Activated B cell treated with CpG ODN at 0.5 μM for 24 hours (primary cell): ENCODE measurements at regions of chr19 and their contacts with region 1.

Region 1: DNA sequence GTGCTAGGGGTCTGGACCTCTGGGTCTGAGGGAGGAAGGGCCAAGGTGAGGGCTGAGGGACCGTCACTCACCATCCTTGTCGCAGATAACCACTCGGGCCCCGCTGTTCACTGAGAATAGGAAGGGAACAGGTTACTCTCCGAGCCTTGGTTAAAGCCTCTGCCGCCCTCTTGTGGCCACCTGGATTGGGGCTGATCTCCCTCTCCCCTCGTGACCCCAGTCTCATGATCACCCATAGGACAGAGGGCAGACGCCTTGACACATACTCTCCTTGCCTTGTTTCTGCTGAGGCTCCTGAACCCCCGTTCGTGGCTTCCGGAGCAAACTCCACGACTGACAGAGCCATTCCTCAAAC is 580 bp downstream of the HSD17B14 start:
- DNase-seq: peak; percentile 89
- ATAC-seq: peak; percentile 86
- H3K4me3 Mint-ChIP-seq: peak overlapping the region; percentile 88
- H3K27ac Mint-ChIP-seq: peak overlapping the region; percentile 75
- H3K4me1 Mint-ChIP-seq: peaks cover 26% of the 10 kb centered on the region
- H3K27me3 Mint-ChIP-seq: no peaks in the 10 kb centered on the region
- CTCF ChIP-seq: no peak

Region 2: DNA sequence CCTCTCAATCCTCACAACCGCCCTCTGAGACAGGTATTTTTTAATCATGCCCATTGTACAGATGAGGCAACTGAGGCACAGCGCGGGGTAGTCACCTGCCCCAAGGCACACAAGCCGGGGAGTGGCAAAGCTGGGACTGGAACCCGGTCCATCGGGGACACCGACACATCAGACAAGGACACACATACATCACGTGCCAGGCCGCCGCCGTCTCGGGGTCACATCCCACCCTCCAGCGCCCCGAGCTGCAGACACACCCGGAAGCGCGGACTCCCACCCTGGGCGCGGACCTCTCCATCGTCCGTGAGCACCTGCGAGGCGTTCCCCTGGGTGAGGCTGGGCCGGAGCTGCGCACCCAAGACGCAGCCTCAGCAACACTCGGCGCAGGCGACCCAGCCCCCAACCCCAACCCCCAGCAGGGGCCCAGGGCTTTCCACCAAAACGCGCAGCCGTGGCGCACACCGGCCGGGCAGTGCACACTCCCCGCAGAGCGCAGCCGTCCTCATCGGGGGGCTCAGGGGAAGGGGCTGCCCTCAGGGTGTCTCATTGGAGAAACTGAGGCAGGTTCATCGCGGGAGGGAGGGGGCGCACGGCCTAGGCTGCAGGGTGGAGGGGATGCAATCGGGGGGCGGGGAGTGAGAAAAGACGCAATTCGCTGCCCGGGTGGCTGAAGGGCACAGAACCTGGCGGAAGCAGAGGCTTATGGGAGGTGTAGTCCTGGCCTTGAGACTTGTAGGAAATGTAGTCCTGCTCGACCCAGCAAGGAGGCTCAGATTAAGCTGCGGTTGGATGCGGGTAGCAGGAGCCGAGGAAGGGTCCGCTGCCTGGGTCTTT is 322.2 kb before region 1 on chr19:
- CTCF ChIA-PET with region 1: no interaction called
- POLR2A ChIA-PET with region 1: no interaction called
- intact Hi-C with region 1: loop called (anchors 10 kb)
- DNase-seq: peak; percentile 51
- ATAC-seq: peak; percentile 90
- H3K4me3 Mint-ChIP-seq: no peak overlapping the region
- H3K27ac Mint-ChIP-seq: peak overlapping the region; percentile 69
- H3K4me1 Mint-ChIP-seq: peaks cover 17% of the 10 kb centered on the region
- H3K27me3 Mint-ChIP-seq: peaks cover 2% of the 10 kb centered on the region
- CTCF ChIP-seq: no peak

Region 3: GRCh38 chr19:48780631-48781391 is 54.9 kb before region 1 on chr19:
- CTCF ChIA-PET with region 1: interaction called, 4 read pairs
- POLR2A ChIA-PET with region 1: interaction called, 13 read pairs
- intact Hi-C with region 1: no loop called
- DNase-seq: no peak
- ATAC-seq: no peak
- H3K4me3 Mint-ChIP-seq: no peak overlapping the region
- H3K27ac Mint-ChIP-seq: peak overlapping the region; percentile 51
- H3K4me1 Mint-ChIP-seq: peaks cover 22% of the 10 kb centered on the region
- H3K27me3 Mint-ChIP-seq: no peaks in the 10 kb centered on the region
- CTCF ChIP-seq: no peak

Region 4: GRCh38 chr19:48795055-48795684 is 40.5 kb before region 1 on chr19:
- CTCF ChIA-PET with region 1: interaction called, 272 read pairs
- POLR2A ChIA-PET with region 1: interaction called, 20 read pairs
- intact Hi-C with region 1: loop called (anchors 1 kb)
- DNase-seq: peak; percentile 79
- ATAC-seq: peak; percentile 98
- H3K4me3 Mint-ChIP-seq: peak overlapping the region; percentile 94
- H3K27ac Mint-ChIP-seq: peak overlapping the region; percentile 88
- H3K4me1 Mint-ChIP-seq: peaks cover 10% of the 10 kb centered on the region
- H3K27me3 Mint-ChIP-seq: no peaks in the 10 kb centered on the region
- CTCF ChIP-seq: peak; percentile 86

Region 5: DNA sequence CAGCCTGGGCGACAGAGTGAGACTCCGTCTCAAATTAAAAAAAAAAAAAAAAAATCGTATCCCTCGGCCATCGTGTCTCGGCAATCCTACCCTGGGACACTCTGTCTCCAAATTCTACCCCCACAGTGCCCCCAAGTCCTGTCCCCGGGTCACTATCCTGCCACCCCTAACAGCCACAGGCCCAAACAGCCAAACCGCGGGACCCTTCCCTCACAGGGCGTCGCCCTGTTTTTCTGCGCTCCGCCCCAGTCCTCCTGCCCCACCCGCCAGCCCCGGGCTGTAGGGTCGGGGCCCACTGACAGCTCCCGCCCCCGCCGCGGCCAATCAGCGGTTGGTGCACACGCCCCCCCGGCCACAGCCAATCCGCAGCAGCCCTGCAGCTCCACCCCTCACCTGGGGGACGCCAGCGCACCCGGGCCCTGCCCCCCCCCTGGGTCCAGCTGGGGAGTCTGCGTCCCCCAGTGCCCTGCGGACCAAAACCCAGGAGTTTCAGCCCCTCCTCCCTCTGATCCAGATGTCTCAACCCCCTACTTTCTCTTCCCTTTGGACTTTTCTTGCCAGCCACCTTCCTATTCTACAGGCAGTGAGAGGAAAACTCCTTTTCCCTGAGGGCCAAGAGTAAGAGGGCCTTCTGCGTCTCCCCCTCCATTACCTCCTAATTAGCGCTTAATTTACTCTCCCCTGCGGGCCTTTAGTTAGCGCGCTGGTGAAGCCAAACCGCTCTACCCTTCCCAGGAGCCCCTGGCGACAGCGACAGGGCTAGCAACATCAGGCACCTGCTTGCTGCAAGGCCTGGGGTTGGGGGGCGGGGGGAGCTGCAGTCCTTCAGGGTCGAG is 23.4 kb before region 1 on chr19:
- CTCF ChIA-PET with region 1: interaction called, 3 read pairs
- POLR2A ChIA-PET with region 1: interaction called, 34 read pairs
- intact Hi-C with region 1: loop called (anchors 1 kb)
- DNase-seq: peak; percentile 74
- ATAC-seq: peak; percentile 77
- H3K4me3 Mint-ChIP-seq: peak overlapping the region; percentile 88
- H3K27ac Mint-ChIP-seq: peak overlapping the region; percentile 91
- H3K4me1 Mint-ChIP-seq: peaks cover 29% of the 10 kb centered on the region
- H3K27me3 Mint-ChIP-seq: no peaks in the 10 kb centered on the region
- CTCF ChIP-seq: no peak

Region 6: DNA sequence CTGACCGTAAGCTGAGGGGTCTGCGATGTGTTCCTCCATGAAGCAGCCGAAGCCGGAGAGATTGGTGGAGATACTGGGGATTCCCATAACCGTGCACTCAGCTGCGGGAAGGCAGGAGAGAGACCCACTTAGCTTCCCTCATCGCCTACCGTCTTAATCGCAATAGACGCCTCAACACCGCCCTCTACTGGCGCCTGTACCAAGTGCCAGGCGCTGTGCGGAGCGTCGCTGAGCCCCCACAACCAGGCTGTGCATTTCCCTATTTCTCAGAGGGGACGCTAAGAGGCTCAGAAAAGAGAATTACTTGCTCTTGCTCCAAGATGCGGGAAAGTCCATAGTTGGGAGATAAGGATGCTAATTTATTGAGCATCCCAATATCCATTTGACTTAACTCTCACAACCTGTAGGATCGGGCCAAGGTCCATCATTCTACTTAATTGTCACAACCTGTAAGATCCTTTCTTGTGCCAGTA is 135.2 kb after region 1 on chr19:
- CTCF ChIA-PET with region 1: interaction called, 8 read pairs
- POLR2A ChIA-PET with region 1: interaction called, 8 read pairs
- intact Hi-C with region 1: loop called (anchors 1 kb)
- DNase-seq: peak; percentile 79
- ATAC-seq: peak; percentile 91
- H3K4me3 Mint-ChIP-seq: no peak overlapping the region
- H3K27ac Mint-ChIP-seq: peak overlapping the region; percentile 46
- H3K4me1 Mint-ChIP-seq: peaks cover 30% of the 10 kb centered on the region
- H3K27me3 Mint-ChIP-seq: no peaks in the 10 kb centered on the region
- CTCF ChIP-seq: peak; percentile 97